GM13977 (cell line): ENCODE measurements at regions of chr17 and their contacts with region 1.

Region 1: GRCh38 chr17:50213026-50214022 is 11.9 kb upstream of the COL1A1 start:
- DNase-seq: peak; percentile 80
- CTCF ChIP-seq: peak; percentile 15

Region 2: GRCh38 chr17:50020841-50021599 is 192.3 kb before region 1 on chr17:
- in situ Hi-C with region 1: no loop called
- DNase-seq: no peak
- CTCF ChIP-seq: no peak

Region 3: GRCh38 chr17:50289991-50290702 is 76.8 kb after region 1 on chr17:
- in situ Hi-C with region 1: loop called (anchors 10 kb)
- DNase-seq: peak; percentile 18
- CTCF ChIP-seq: no peak

Region 4: DNA sequence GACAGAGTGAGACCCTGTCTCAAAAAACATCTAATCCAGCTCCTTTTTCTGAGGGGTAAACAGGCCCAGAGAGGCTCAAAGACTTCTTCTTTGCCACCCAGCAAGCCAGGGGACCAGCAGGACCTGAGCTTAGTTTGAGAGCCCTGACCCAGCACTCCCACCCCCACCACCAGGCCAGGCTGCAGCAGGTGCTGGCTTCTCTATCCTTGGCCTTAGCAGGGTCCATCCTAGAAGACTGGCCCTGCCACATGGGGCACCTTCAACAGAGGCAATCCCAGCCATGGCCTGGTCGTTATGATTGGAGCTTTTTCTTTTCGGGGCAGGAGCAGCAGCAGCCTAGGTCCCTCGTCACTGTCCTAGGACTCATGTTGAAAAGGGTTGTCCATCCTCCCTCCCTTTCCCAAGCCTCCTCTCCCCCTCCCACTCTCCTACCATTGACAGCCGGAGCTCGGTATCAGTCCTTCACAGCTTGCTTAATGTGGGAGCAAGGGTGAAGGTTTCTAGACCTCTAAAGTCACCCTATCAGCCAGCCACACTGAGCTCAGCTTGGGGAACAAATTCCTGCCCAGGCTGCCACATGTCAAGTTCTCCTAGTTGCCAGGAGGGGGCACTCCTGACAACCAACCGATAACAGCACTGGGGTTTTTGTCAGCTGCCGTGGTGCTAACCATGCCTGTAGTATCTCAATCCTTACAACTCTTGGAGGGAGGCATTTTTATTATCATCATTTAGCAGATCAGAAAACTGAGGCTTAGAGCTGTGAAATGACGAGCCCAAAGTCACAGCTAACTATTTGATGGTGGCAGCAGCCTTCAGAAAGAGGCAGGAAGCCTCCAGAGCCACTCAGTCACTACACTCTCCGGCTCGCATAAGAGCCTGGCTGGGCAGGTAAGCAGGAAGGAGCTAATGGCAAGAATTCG is 148.5 kb after region 1 on chr17:
- in situ Hi-C with region 1: no loop called
- DNase-seq: peak; percentile 85
- CTCF ChIP-seq: peak; percentile 81